Mammary epithelial cell (primary cell): ENCODE measurements at regions of chr4 and their contacts with region 1.

Region 1: GRCh38 chr4:88456757-88457306 is at the start of gene HERC5:
- DNase-seq: peak; percentile 79
- H3K4me3 ChIP-seq: peak within 1 kb of the TSS; percentile 53 to 71 (median 69)
- H3K27ac ChIP-seq: no peak within 1 kb of the TSS
- H3K4me1 ChIP-seq: peaks cover 17% of the 10 kb centered on the region
- H3K27me3 ChIP-seq: no peaks in the 10 kb centered on the region
- CTCF ChIP-seq: peak; percentile 55 to 80
- total RNA-seq, gene HERC5: 0.67 to 1.1 TPM

Region 2: DNA sequence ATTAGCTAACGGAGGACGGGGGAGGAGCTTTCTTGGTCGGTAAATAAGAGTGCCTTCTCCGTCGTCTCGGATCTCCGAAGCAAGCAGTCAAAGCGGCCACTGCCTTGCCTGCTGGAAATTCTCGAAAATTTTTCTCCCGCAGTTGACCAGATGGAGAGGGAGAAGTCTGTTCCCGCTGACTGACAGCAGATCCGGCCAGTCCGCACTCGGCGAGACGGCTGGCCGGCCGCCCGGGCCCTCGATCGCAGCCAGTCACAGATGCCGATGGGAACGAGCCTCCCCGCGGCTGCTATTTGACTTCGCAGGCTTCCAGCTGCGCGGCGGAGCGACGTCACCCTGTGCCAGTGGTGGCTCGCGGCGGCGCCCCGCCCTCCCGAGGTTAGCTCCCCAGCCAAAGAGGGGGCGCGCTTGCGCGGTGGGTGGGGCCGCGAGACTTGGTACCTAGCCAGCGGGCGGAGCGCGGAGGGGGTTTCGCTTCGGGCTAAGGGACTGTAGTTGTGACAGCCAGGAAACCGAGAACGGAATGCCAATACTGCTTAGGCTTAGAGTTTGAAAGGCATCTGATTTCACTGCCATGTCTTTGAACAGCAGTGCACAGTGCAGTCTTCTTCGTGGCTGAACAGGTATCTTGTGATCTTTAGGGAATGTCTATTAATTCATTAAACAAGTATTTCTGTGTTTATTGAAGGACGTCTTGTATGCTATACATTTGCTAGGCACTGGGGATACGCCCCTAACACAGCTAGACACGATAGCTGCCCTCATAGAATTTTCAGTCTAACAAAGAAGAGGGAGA is 172.2 kb before region 1 on chr4 and contains the start of gene PPM1K:
- CTCF ChIA-PET with region 1: no interaction called
- dilution Hi-C with region 1: no loop called
- in situ Hi-C with region 1: no loop called
- intact Hi-C with region 1: loop called (anchors 5 kb)
- DNase-seq: peak; percentile 99
- H3K4me3 ChIP-seq: peak within 1 kb of the TSS; percentile 62 to 80 (median 79)
- H3K27ac ChIP-seq: peak within 1 kb of the TSS; percentile 82
- H3K4me1 ChIP-seq: peaks cover 8% of the 10 kb centered on the region
- H3K27me3 ChIP-seq: no peaks in the 10 kb centered on the region
- CTCF ChIP-seq: peak in 1 of 2 donors; percentile 26
- total RNA-seq, gene PPM1K: 10.2 to 13.6 TPM

Region 3: GRCh38 chr4:88366460-88366859 is 90.4 kb before region 1 on chr4:
- CTCF ChIA-PET with region 1: interaction called, 3 read pairs
- dilution Hi-C with region 1: no loop called
- in situ Hi-C with region 1: no loop called
- intact Hi-C with region 1: loop called (anchors 1 kb)
- DNase-seq: no peak
- H3K4me3 ChIP-seq: no peak overlapping the region
- H3K27ac ChIP-seq: no peak overlapping the region
- H3K4me1 ChIP-seq: no peaks in the 10 kb centered on the region
- H3K27me3 ChIP-seq: no peaks in the 10 kb centered on the region
- CTCF ChIP-seq: no peak

Region 4: GRCh38 chr4:88378691-88379559 is 77.9 kb before region 1 on chr4 and contains the start of gene HERC6:
- CTCF ChIA-PET with region 1: no interaction called
- dilution Hi-C with region 1: no loop called
- in situ Hi-C with region 1: no loop called
- intact Hi-C with region 1: loop called (anchors 1 kb)
- DNase-seq: peak; percentile 89
- H3K4me3 ChIP-seq: peak within 1 kb of the TSS; percentile 91 to 95 (median 94)
- H3K27ac ChIP-seq: peak within 1 kb of the TSS; percentile 69
- H3K4me1 ChIP-seq: peaks cover 3% of the 10 kb centered on the region
- H3K27me3 ChIP-seq: no peaks in the 10 kb centered on the region
- CTCF ChIP-seq: peak; percentile 45 to 80
- total RNA-seq, gene HERC6: 7.6 to 10.2 TPM

Region 5: DNA sequence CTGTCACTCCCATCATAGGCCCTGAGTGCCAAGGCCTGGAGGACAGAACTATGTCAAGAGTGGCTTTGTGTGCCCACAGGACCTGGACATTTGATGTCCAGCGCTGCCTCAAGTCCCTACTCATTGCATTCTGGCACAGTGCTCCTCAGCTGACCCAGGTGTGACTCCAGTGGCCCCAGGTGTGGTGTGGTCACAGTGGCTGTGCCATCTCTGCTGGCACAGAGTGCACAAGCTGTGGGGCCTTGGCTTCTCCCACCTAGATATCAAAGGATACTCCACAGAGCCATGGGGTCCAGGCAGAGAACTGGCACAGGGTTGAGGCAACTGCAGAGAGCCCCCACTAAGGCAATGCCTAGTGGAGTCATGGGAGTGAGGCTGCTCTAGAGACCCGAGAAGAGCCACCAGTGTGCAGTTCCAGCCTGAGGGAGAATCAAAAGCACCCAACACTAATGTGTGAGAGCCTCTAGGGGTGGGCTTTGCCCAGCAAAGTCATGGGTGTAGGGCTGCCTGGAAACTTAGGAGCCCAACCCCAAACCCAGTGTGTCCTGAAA is 41.1 kb after region 1 on chr4:
- CTCF ChIA-PET with region 1: no interaction called
- dilution Hi-C with region 1: no loop called
- in situ Hi-C with region 1: no loop called
- intact Hi-C with region 1: loop called (anchors 2 kb)
- DNase-seq: no peak
- H3K4me3 ChIP-seq: no peak overlapping the region
- H3K27ac ChIP-seq: no peak overlapping the region
- H3K4me1 ChIP-seq: no peaks in the 10 kb centered on the region
- H3K27me3 ChIP-seq: no peaks in the 10 kb centered on the region
- CTCF ChIP-seq: no peak

Region 6: DNA sequence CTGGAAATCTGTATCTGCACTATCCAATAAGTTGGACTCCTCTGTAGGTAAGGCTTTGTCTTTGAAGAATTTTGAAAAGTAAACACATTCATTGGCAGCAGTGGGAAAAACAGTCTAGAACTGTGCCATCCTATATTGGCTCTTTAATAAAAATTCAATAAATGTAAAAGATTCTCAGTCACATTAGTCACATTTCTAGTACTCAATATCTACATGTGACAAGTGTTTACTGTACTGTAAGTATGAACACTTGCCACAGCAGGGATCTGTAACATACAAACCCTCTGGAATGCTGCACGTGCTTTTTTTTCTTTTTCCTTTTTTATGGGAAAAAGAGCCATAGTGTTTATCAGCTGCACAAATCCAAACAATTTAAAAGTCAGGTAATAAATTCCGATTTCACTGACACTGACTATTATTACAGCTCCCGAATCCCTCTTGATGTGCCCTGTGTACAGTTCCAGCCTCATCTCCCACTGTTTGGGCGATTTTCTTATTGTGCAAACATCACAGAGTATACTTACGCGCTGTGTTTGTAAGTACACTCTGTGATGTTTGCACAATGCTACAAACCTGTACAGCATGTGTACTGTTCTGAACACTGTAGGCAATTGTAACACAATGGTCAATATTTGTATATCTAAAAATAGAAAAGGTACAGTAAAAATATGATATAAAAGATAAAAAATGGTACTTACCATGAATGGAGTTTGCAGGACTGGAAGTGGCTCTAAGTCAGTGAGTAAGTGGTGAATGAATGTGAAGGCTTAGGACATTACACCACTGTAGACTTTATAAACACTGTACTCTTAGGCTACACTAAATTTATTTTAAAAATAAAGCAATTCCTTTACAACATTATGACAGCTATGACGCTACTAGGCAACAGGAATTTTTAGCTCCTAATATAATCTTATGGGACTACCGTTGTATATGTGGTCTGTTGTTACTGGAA is 58.0 kb after region 1 on chr4:
- CTCF ChIA-PET with region 1: no interaction called
- dilution Hi-C with region 1: no loop called
- in situ Hi-C with region 1: no loop called
- intact Hi-C with region 1: loop called (anchors 2 kb)
- DNase-seq: no peak
- H3K4me3 ChIP-seq: no peak overlapping the region
- H3K27ac ChIP-seq: no peak overlapping the region
- H3K4me1 ChIP-seq: no peaks in the 10 kb centered on the region
- H3K27me3 ChIP-seq: no peaks in the 10 kb centered on the region
- CTCF ChIP-seq: no peak

Region 7: GRCh38 chr4:88803600-88804096 is 346.8 kb after region 1 on chr4:
- CTCF ChIA-PET with region 1: no interaction called
- dilution Hi-C with region 1: no loop called
- in situ Hi-C with region 1: no loop called
- intact Hi-C with region 1: no loop called
- DNase-seq: peak; percentile 82
- H3K4me3 ChIP-seq: no peak overlapping the region
- H3K27ac ChIP-seq: no peak overlapping the region
- H3K4me1 ChIP-seq: peaks cover 6% of the 10 kb centered on the region
- H3K27me3 ChIP-seq: no peaks in the 10 kb centered on the region
- CTCF ChIP-seq: no peak

Region 8: GRCh38 chr4:89283226-89284009 is 826.6 kb after region 1 on chr4:
- CTCF ChIA-PET with region 1: no interaction called
- dilution Hi-C with region 1: no loop called
- in situ Hi-C with region 1: no loop called
- intact Hi-C with region 1: no loop called
- DNase-seq: peak; percentile 61
- H3K4me3 ChIP-seq: no peak overlapping the region
- H3K27ac ChIP-seq: no peak overlapping the region
- H3K4me1 ChIP-seq: peaks cover 6% of the 10 kb centered on the region
- H3K27me3 ChIP-seq: no peaks in the 10 kb centered on the region
- CTCF ChIP-seq: no peak